CD4-positive, alpha-beta memory T cell (primary cell): ENCODE measurements at regions of chr9 and their contacts with region 1.

Region 1: GRCh38 chr9:133375724-133376654 is at the starts of genes STKLD1 and SURF4:
- DNase-seq: peak; percentile 89 to 95 (median 92)
- H3K4me3 ChIP-seq: peak within 1 kb of the TSS; percentile 59 to 72
- H3K4me3 Mint-ChIP-seq: peak within 1 kb of the TSS; percentile 89 to 97 (median 92)
- H3K27ac ChIP-seq: peak within 1 kb of the TSS; percentile 89
- H3K27ac Mint-ChIP-seq: peak within 1 kb of the TSS; percentile 82 to 98 (median 96)
- H3K4me1 ChIP-seq: peaks cover 45% of the 10 kb centered on the region
- H3K4me1 Mint-ChIP-seq: peaks cover 27 to 40% (median 35%) of the 10 kb centered on the region in 4 donors
- H3K27me3 ChIP-seq: no peaks in the 10 kb centered on the region
- H3K27me3 Mint-ChIP-seq: no peaks in the 10 kb centered on the region
- total RNA-seq, gene STKLD1: 1.4 to 2.1 TPM
- total RNA-seq, gene SURF4: 103 to 110 TPM

Region 2: DNA sequence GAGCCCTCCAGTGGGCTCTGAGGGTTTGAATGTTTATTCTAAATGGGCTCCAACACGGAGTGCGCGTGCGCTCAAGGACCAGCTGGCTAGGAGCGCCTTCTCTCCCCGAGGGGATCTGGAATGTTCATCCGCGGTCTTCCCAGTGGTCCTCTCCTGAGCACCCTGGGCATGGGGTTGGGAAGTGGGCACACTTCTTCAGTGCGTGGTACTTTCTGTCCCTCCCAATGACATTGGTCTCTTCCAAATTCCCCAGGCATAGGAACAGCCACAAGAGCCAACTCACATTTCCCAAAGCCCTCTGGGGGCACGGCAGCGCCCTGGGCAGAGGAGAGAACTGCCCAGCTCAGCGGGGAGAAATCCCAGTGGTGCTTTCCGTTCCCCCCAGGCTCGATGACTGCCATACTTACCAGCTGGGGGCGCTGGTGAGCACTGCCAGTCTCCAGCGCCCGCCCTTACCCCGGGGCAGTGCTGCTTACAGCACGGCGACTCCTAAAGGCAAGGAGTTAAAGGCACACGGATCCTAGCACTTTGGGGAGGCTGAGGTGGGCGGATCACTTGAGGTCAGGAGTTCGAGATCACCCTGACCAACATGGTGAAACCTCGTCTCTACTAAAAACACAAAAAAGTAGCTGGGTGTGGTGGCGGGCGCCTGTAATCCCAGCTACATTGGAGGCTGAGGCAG is 137.0 kb before region 1 on chr9:
- CTCF ChIA-PET with region 1: interaction called, 16 read pairs
- POLR2A ChIA-PET with region 1: no interaction called
- intact Hi-C with region 1: no loop called
- DNase-seq: peak; percentile 53 to 62 (median 56)
- H3K4me3 ChIP-seq: no peak overlapping the region
- H3K4me3 Mint-ChIP-seq: peak overlapping the region in 6 of 8 donors; percentile 17 to 65 (median 46)
- H3K27ac ChIP-seq: peak overlapping the region; percentile 2
- H3K27ac Mint-ChIP-seq: no peak overlapping the region
- H3K4me1 ChIP-seq: peaks cover 13% of the 10 kb centered on the region
- H3K4me1 Mint-ChIP-seq: peaks cover 0 to 17% (median 11%) of the 10 kb centered on the region in 4 donors
- H3K27me3 ChIP-seq: no peaks in the 10 kb centered on the region
- H3K27me3 Mint-ChIP-seq: peaks cover 11 to 12% of the 10 kb centered on the region in 2 donors

Region 3: DNA sequence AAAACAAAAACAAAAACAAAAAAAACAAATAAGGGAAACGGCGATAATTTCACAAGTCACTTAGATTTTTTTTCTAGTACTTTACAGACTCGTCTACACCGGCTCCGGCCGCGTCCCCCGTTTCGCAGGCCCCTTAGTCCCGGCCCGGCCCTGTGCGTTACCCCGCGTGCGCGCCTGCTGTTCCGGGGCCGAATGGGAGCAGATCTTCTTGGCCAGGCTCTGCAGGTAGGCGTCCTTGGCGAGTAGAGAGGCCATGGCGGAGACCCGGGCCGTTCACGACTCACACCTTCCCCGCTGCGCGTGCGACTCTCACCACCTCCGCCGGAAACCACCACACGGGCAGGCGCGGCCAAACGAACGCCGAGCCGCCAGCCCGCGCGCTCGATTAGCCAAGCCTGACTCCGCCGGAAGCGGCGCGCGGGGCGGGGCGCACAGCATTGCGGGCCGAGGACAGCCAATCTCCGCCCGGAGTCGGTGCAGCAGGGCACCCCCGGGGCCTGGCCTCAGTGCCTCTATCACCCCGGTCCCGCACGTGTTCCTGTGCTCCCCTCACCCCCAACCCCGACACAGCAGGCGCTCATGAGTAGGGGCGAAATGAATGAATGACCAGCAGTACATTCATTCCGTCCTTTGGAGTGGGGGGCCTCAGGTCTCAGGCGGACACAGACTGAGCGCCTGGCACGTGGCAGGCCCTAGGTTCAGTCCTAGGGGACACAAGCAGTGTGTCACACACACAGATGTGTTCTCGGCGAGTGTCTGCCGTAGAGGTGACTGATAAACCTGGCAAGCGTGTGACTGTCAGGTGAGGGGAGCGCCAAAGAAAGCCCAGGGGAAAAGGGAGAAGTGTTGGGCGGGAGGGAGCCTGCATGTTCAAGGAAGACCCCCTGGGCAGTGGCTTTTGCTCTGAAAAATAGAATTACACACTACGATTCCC is 39.8 kb before region 1 on chr9 and contains the start of gene SURF6:
- CTCF ChIA-PET with region 1: interaction called, 15 read pairs
- POLR2A ChIA-PET with region 1: interaction called, 7 read pairs
- intact Hi-C with region 1: loop called (anchors 1 kb)
- DNase-seq: peak; percentile 93 to 94 (median 94)
- H3K4me3 ChIP-seq: peak within 1 kb of the TSS; percentile 50 to 69
- H3K4me3 Mint-ChIP-seq: peak within 1 kb of the TSS; percentile 92 to 97 (median 96)
- H3K27ac ChIP-seq: peak within 1 kb of the TSS; percentile 64
- H3K27ac Mint-ChIP-seq: peak within 1 kb of the TSS; percentile 86 to 96 (median 93)
- H3K4me1 ChIP-seq: peaks cover 41% of the 10 kb centered on the region
- H3K4me1 Mint-ChIP-seq: peaks cover 16 to 64% (median 28%) of the 10 kb centered on the region in 4 donors
- H3K27me3 ChIP-seq: no peaks in the 10 kb centered on the region
- H3K27me3 Mint-ChIP-seq: no peaks in the 10 kb centered on the region
- total RNA-seq, gene SURF6: 28.6 to 28.9 TPM

Region 4: GRCh38 chr9:133347985-133348717 is 27.8 kb before region 1 on chr9 and contains the starts of genes MED22 and RPL7A:
- CTCF ChIA-PET with region 1: interaction called, 15 read pairs
- POLR2A ChIA-PET with region 1: interaction called, 437 read pairs
- intact Hi-C with region 1: loop called (anchors 1 kb)
- DNase-seq: peak; percentile 92 to 94 (median 92)
- H3K4me3 ChIP-seq: peak within 1 kb of the TSS; percentile 80 to 99
- H3K4me3 Mint-ChIP-seq: peak within 1 kb of the TSS; percentile 97 to 100 (median 98)
- H3K27ac ChIP-seq: peak within 1 kb of the TSS; percentile 88
- H3K27ac Mint-ChIP-seq: peak within 1 kb of the TSS; percentile 93 to 99 (median 96)
- H3K4me1 ChIP-seq: peaks cover 33% of the 10 kb centered on the region
- H3K4me1 Mint-ChIP-seq: peaks cover 21 to 47% (median 33%) of the 10 kb centered on the region in 4 donors
- H3K27me3 ChIP-seq: no peaks in the 10 kb centered on the region
- H3K27me3 Mint-ChIP-seq: no peaks in the 10 kb centered on the region
- total RNA-seq, gene MED22: 40.2 to 42.8 TPM
- total RNA-seq, gene RPL7A: 2,104 to 2,268 TPM

Region 5: GRCh38 chr9:133356391-133357091 is 19.4 kb before region 1 on chr9 and contains the starts of genes SURF1 and SURF2:
- CTCF ChIA-PET with region 1: interaction called, 51 read pairs
- POLR2A ChIA-PET with region 1: interaction called, 437 read pairs
- intact Hi-C with region 1: loop called (anchors 1 kb)
- DNase-seq: peak; percentile 85 to 90 (median 88)
- H3K4me3 ChIP-seq: peak within 1 kb of the TSS; percentile 61 to 73
- H3K4me3 Mint-ChIP-seq: peak within 1 kb of the TSS; percentile 85 to 92 (median 88)
- H3K27ac ChIP-seq: peak within 1 kb of the TSS; percentile 76
- H3K27ac Mint-ChIP-seq: peak within 1 kb of the TSS; percentile 89 to 93 (median 92)
- H3K4me1 ChIP-seq: peaks cover 33% of the 10 kb centered on the region
- H3K4me1 Mint-ChIP-seq: peaks cover 15 to 44% (median 27%) of the 10 kb centered on the region in 4 donors
- H3K27me3 ChIP-seq: no peaks in the 10 kb centered on the region
- H3K27me3 Mint-ChIP-seq: no peaks in the 10 kb centered on the region
- total RNA-seq, gene SURF1: 54.3 to 61.1 TPM
- total RNA-seq, gene SURF2: 19.5 to 19.8 TPM

Region 6: GRCh38 chr9:133362359-133363044 is 13.5 kb before region 1 on chr9:
- CTCF ChIA-PET with region 1: interaction called, 51 read pairs
- POLR2A ChIA-PET with region 1: interaction called, 437 read pairs
- intact Hi-C with region 1: no loop called
- DNase-seq: no peak
- H3K4me3 ChIP-seq: no peak overlapping the region
- H3K4me3 Mint-ChIP-seq: no peak overlapping the region
- H3K27ac ChIP-seq: no peak overlapping the region
- H3K27ac Mint-ChIP-seq: peak overlapping the region in 3 of 7 donors; percentile 35 to 76 (median 62)
- H3K4me1 ChIP-seq: peaks cover 27% of the 10 kb centered on the region
- H3K4me1 Mint-ChIP-seq: peaks cover 14 to 37% (median 21%) of the 10 kb centered on the region in 4 donors
- H3K27me3 ChIP-seq: no peaks in the 10 kb centered on the region
- H3K27me3 Mint-ChIP-seq: no peaks in the 10 kb centered on the region

Region 7: DNA sequence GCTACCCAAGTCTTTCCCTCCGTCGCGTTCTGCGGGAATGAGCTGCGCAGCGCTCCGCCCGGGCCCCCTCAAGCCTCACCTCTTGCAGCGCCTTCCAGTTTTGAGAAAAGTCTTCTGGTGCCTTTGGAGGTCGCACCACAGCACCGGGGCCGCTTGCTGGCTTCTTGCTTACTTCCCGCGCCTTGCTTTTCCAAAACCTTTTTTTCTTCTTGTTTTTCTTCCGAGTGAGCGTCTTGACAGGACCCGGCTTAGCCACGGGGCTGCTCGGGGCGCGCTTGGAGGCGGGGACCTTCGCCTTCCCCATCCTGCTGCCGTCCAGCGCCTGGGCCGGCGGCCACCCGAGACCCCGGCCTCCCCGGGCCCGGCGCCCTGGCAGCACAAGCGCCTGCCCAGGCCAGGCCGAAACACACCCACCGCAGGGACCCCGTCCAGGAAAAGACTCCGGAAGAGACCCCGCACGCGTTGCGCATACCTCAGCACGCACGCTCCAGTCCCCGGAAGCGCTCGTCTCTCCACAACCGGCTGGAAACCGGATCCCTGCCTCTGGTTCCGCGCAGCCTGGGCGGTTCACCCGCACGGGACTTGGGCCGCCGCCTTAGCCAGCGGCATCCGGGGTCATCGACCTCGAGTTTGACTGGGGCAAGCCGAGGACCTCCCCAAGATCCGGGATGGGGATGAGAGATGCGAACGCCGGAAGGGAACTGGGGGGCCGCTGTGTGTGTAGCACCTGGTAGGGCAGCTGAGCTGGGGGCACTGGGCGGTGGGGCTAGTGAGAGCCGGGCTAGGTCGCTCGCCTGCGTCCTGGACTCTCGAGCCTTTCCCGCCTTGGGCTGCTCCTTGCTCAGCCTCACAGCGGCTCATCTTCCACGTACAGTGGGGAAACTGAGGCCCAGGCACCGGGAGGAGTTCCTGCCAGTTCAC is 41.8 kb after region 1 on chr9 and contains the start of gene REXO4:
- CTCF ChIA-PET with region 1: interaction called, 3 read pairs
- POLR2A ChIA-PET with region 1: interaction called, 10 read pairs
- intact Hi-C with region 1: loop called (anchors 1 kb)
- DNase-seq: peak; percentile 83 to 87 (median 84)
- H3K4me3 ChIP-seq: peak within 1 kb of the TSS; percentile 80 to 93
- H3K4me3 Mint-ChIP-seq: peak within 1 kb of the TSS; percentile 88 to 93 (median 92)
- H3K27ac ChIP-seq: peak within 1 kb of the TSS; percentile 76
- H3K27ac Mint-ChIP-seq: peak within 1 kb of the TSS; percentile 86 to 95 (median 92)
- H3K4me1 ChIP-seq: peaks cover 24% of the 10 kb centered on the region
- H3K4me1 Mint-ChIP-seq: peaks cover 28 to 76% (median 53%) of the 10 kb centered on the region in 4 donors
- H3K27me3 ChIP-seq: no peaks in the 10 kb centered on the region
- H3K27me3 Mint-ChIP-seq: no peaks in the 10 kb centered on the region
- total RNA-seq, gene REXO4: 38.7 to 39.0 TPM

Region 8: DNA sequence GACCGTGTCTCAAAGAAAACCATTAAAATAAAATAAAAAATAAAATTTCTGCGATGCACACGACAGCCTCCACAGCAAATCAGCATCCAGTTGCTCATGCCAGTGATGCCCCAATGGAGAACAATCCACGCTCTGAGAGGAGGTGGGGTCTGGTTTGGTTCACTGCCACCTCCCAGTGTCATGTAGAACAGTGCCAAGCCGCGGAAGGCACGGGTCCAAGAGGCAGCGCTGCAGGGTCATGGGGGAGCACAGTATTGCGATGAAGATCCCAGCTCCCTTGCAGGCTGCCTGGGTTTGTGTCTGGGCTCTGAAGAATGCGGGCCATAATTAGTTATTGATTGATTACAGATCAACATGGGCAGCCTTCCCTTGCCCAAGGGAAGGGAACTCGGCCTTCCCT is 77.7 kb after region 1 on chr9:
- CTCF ChIA-PET with region 1: no interaction called
- POLR2A ChIA-PET with region 1: no interaction called
- intact Hi-C with region 1: no loop called
- DNase-seq: peak in 1 of 5 donors; percentile 3
- H3K4me3 ChIP-seq: no peak overlapping the region
- H3K4me3 Mint-ChIP-seq: no peak overlapping the region
- H3K27ac ChIP-seq: no peak overlapping the region
- H3K27ac Mint-ChIP-seq: no peak overlapping the region
- H3K4me1 ChIP-seq: peaks cover 1% of the 10 kb centered on the region
- H3K4me1 Mint-ChIP-seq: peaks cover 0 to 2% (median 1%) of the 10 kb centered on the region in 4 donors
- H3K27me3 ChIP-seq: no peaks in the 10 kb centered on the region
- H3K27me3 Mint-ChIP-seq: peaks cover 0 to 3% of the 10 kb centered on the region in 2 donors